ENCODE measurements at regions of chr17 and their contacts with region 1.

Region 1: GRCh38 chr17:43846221-43846712 is 709 bp upstream of the CD300LG start:
- DNase-seq: peak; percentile 94
- ATAC-seq: peak; percentile 98

Region 2: DNA sequence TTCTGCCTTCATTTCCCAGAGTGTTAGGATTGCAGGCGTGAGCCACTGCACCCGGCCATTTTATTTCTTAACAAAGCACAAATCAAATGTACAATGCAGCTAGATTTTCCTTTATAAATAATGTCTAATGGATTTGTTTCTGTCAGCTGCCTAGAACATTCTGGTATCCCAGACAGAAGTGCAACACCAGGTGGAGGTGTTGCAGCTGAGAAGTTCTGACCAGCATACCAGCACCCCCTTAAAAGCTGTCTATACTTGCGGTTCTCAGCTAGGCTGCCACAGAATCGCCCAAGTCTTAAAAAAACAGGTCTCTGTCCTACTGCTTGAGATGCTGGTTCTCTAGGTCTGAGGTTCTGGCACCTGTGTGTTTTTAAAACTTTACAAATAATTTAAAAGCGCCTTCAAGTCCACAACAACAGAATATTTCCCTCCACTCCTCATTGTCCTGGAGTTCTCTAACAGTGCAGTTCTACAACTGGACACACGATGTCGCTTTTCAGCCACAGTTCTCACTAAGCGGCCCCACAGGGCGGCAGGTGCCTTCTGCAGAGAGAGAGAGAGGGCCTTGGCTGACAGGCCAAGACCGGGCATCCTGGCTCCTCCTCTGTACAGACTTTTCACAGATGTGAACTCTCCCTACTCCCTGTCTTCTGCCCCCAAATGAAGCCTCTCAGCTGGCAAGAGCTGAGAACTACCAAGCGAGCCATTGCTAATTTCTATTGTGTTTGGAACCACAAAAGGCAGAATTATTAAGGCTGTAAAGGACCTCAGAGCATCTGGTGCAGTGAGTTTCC is 152.0 kb before region 1 on chr17:
- intact Hi-C with region 1: loop called (anchors 10 kb)
- DNase-seq: peak; percentile 78
- ATAC-seq: peak; percentile 79

Region 3: DNA sequence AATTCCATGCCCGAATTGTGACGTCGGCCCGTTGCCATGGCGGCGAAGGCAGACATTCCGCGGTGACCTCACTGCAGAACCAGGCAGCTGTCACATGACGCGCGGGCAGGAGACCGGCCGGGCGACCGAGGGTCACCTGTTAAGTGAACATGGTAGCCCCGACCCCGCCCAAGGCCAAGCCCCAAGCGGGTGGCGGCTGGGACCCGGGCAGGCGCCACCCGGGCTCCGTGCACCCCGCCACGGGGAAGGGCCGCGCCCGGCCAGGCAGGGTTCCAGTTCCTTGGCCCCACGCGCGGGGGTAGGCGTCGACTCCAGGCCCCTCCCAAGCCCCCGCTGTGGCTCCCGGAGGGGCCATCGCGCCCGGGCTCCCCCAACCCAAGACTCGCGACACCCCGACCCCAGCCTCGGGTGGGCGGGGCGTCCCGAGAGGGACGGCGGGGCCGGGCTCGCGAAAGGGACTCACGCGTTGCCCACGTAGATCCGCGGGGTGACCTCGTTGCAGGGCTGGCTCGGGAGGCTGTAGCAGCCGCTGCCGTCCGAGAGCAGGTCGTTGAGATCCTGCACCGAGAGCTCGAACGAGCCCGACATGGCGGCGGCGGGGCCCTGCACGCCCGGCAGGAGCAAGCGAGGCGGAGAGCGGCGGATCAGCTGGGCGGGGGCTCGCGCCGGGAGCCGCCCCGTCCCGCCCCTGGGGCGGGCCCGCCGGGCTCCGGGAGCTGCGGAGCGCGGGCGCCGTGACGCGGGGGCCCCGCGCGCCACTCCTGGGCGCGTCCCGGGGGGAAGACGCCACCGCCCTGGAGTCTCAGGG is 67.7 kb before region 1 on chr17 and contains the start of gene DUSP3:
- intact Hi-C with region 1: loop called (anchors 5 kb)
- DNase-seq: peak; percentile 97
- ATAC-seq: peak; percentile 93
- total RNA-seq, gene DUSP3: 224 TPM

Region 4: DNA sequence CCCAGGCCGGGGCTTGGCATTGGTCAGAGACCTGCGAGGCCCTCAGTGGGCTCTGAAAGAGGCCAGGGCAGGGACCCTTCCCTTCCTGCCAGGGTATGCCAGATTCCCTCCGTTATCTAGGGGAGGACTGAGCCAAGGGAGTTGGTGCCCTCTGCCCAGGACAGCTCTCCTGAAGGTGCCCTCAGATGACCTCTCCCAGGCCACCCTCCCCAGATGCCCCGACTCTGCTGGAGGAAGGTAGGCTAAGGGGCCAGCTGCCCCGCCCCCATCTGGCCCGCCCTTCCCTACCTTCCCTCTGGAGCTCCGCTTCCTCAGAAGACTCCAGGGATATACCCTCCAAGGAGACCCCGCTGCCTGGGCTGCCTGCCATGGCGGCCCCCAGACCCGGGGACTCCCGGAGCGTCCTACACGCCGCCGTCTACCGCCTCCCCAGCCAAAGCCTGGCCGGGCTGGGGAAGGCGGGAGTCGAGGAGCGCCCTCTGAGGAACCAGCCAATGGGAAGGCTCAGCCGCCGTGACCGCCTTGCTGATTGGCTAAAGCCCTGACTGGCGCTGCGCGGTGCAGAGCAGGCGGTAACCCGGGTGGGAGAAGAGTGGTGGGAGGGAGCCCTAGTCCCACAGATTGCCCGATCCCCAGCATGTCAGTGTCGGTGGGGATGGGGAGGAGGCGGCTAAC is 54.1 kb after region 1 on chr17:
- intact Hi-C with region 1: no loop called
- DNase-seq: peak; percentile 94
- ATAC-seq: peak; percentile 98

Region 5: GRCh38 chr17:44123356-44124117 is 277.3 kb after region 1 on chr17 and contains the start of gene HDAC5:
- intact Hi-C with region 1: no loop called
- DNase-seq: peak; percentile 97
- ATAC-seq: peak; percentile 98
- total RNA-seq, gene HDAC5: 67.7 TPM

Measured in Right ventricle myocardium superior (tissue), 1 donor.